Endothelial cell of umbilical vein (primary cell): ENCODE measurements at regions of chr7 and their contacts with region 1.

Region 1: GRCh38 chr7:129298268-129298893 is 73.6 kb downstream of the AHCYL2 start:
- DNase-seq: peak; percentile 66
- H3K4me3 ChIP-seq: no peak overlapping the region
- H3K27ac ChIP-seq: no peak overlapping the region
- H3K4me1 ChIP-seq: no peaks in the 10 kb centered on the region
- H3K27me3 ChIP-seq: no peaks in the 10 kb centered on the region
- CTCF ChIP-seq: peak; percentile 54 to 56
- POLR2A ChIP-seq: no peak

Region 2: GRCh38 chr7:129210256-129210988 is 88.0 kb before region 1 on chr7:
- CTCF ChIA-PET with region 1: interaction called, 17 read pairs
- POLR2A ChIA-PET with region 1: no interaction called
- dilution Hi-C with region 1: no loop called
- intact Hi-C with region 1: no loop called
- DNase-seq: peak; percentile 65
- H3K4me3 ChIP-seq: no peak overlapping the region
- H3K27ac ChIP-seq: no peak overlapping the region
- H3K4me1 ChIP-seq: no peaks in the 10 kb centered on the region
- H3K27me3 ChIP-seq: no peaks in the 10 kb centered on the region
- CTCF ChIP-seq: peak; percentile 78 to 93
- POLR2A ChIP-seq: no peak

Region 3: GRCh38 chr7:129224251-129225205 is 73.9 kb before region 1 on chr7 and contains the start of gene AHCYL2:
- CTCF ChIA-PET with region 1: interaction called, 235 read pairs
- POLR2A ChIA-PET with region 1: no interaction called
- dilution Hi-C with region 1: no loop called
- intact Hi-C with region 1: no loop called
- DNase-seq: peak; percentile 98
- H3K4me3 ChIP-seq: peak within 1 kb of the TSS; percentile 74 to 94 (median 79)
- H3K27ac ChIP-seq: peak within 1 kb of the TSS; percentile 92
- H3K4me1 ChIP-seq: peaks cover 22% of the 10 kb centered on the region
- H3K27me3 ChIP-seq: no peaks in the 10 kb centered on the region
- CTCF ChIP-seq: no peak
- POLR2A ChIP-seq: no peak
- total RNA-seq, gene AHCYL2: 11.0 and 13.5 TPM in 2 replicates

Region 4: DNA sequence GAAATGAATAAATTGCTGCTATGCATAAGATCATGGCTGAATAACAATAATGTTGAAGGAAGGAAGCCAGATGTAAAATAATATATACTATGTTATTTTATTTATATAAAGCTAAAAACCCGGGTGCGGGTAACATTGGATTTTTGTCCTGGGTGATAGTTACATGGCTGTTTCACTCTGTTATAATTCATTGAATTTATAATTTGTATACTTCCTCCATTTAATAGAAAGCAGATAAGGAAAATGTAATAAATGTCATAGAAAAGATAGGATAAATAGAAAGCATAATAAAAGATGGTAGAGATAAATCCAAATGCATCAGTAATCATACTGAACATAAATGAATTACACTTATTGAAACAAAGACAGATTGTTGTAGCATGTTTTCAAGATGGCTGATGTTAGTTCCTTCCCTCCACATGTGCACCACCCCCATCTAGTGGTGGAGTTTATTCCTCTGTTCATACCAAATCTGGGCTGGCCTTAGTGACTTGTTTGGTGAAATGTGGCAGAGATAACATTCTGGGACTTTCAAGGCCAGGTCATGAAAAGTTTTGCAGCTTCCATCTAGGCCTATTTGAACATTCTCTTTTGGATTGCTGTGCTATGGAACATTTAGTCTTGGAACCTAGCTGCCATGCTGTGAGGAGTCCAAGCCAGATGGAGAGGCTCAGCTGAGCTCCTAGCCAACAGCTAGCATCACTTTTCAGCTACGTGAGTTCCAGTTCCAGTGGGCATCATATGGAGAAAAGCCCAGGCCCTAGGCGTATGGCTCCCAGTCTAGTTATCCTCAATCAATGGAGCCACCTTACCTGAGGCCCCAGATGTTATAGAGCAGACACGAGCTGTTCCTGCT is 26.7 kb before region 1 on chr7:
- CTCF ChIA-PET with region 1: interaction called, 7 read pairs
- POLR2A ChIA-PET with region 1: no interaction called
- dilution Hi-C with region 1: no loop called
- intact Hi-C with region 1: loop called (anchors 2 kb)
- DNase-seq: peak; percentile 69
- H3K4me3 ChIP-seq: no peak overlapping the region
- H3K27ac ChIP-seq: no peak overlapping the region
- H3K4me1 ChIP-seq: no peaks in the 10 kb centered on the region
- H3K27me3 ChIP-seq: no peaks in the 10 kb centered on the region
- CTCF ChIP-seq: peak; percentile 56 to 62
- POLR2A ChIP-seq: no peak

Region 5: DNA sequence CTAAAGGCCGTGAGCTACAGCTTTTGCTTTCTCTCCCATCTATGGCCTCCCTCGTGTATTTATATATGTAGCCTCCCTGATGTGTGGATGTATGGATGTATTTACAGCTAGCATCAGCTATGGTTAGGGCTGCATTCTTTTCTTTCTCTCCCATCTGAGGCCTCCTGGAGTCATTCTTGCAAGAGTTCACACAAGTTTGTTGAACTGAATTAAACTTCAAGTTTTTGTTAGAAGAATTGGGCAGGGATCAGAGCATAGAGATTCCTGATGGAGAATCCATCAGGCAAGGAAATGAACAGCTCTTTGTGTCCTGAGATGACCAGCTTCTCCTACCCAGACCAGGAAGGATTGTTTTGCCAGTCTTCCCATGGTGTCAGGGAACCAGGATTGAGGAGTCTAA is 13.3 kb before region 1 on chr7:
- CTCF ChIA-PET with region 1: interaction called, 44 read pairs
- POLR2A ChIA-PET with region 1: no interaction called
- dilution Hi-C with region 1: no loop called
- intact Hi-C with region 1: no loop called
- DNase-seq: no peak
- H3K4me3 ChIP-seq: no peak overlapping the region
- H3K27ac ChIP-seq: no peak overlapping the region
- H3K4me1 ChIP-seq: peaks cover 21% of the 10 kb centered on the region
- H3K27me3 ChIP-seq: no peaks in the 10 kb centered on the region
- CTCF ChIP-seq: no peak
- POLR2A ChIP-seq: no peak

Region 6: DNA sequence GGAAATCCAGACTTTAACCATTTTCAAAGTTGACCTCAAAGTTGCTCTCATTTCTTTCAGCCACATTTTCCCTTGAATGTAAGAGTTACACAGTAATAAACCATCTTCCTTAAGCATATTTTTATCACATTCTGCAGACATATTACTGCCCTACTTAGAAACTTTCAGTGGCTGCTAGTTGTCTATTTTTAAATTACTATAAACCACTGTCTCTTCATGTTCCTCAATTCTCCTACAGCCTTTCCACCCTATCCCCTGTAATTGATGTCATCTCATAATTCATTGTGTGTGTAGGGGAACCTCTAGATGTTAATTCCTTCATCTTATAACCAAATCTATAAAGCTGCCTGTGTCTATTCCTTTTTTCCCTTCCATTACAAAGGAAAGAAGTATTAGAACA is 57.8 kb after region 1 on chr7:
- CTCF ChIA-PET with region 1: no interaction called
- POLR2A ChIA-PET with region 1: no interaction called
- dilution Hi-C with region 1: no loop called
- intact Hi-C with region 1: no loop called
- DNase-seq: no peak
- H3K4me3 ChIP-seq: no peak overlapping the region
- H3K27ac ChIP-seq: no peak overlapping the region
- H3K4me1 ChIP-seq: no peaks in the 10 kb centered on the region
- H3K27me3 ChIP-seq: no peaks in the 10 kb centered on the region
- CTCF ChIP-seq: no peak
- POLR2A ChIP-seq: no peak

Region 7: DNA sequence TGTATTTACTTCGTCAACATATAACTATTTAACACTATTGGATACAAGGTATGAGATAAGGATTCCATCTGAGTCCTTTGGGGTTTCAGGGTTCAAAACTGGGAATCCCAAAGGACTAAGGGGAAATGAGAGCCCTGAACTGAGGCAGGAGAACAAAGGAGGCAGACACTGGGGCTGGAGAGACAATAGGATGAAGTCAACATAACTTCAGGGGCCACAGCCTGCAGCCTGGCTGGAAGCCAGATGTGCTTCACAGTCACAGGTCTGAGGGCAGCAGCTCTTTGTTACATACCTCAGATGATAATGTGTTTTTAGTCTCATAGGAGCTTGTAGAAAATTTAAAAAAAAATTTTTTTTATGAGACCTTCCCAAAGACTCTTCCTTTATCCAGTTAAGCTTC is 386.4 kb after region 1 on chr7:
- CTCF ChIA-PET with region 1: no interaction called
- POLR2A ChIA-PET with region 1: no interaction called
- dilution Hi-C with region 1: no loop called
- intact Hi-C with region 1: no loop called
- DNase-seq: peak; percentile 66
- H3K4me3 ChIP-seq: no peak overlapping the region
- H3K27ac ChIP-seq: no peak overlapping the region
- H3K4me1 ChIP-seq: peaks cover 4% of the 10 kb centered on the region
- H3K27me3 ChIP-seq: no peaks in the 10 kb centered on the region
- CTCF ChIP-seq: no peak
- POLR2A ChIP-seq: no peak